Activated naive CD4-positive, alpha-beta T cell treated with anti-CD3 and anti-CD28 coated beads for 36 hours (primary cell): ENCODE measurements at regions of chr12 and their contacts with region 1.

Region 1: GRCh38 chr12:24630446-24630845 is 318.5 kb downstream of the BCAT1 start:
- DNase-seq: no peak
- H3K4me3 Mint-ChIP-seq: no peak overlapping the region
- H3K27ac Mint-ChIP-seq: no peak overlapping the region
- H3K4me1 Mint-ChIP-seq: no peaks in the 10 kb centered on the region
- H3K27me3 Mint-ChIP-seq: peaks cover 2% of the 10 kb centered on the region

Region 2: DNA sequence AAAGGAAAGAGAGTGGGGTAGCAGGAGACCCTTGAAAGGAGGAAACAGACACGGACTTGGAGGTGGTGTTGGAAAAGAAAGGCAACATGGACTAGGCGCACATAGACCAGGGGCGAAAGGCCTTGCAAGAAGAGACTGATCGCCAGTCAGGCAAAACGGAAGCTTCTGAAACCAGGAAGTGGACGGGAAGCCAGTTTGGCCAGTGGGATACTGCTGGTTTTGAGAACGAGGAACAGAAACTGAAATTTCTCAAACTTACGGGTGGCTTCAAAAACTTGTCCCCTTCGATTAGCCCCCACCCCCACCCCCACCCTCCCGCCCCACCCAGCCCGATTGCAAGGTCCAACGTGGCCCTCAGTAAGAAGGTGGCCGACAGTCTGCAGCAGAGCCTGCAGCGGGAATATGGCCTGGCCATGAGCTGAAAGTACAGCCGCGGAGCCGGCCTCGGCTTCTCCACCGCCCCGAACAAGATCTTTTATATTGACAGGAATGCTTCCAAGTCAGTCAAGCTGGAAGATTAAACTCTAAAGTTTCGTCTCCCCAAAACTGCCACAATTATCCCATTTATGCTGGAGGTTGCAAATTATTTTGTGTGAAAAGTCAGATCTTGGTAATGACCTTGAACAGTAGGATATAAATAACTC is 46.3 kb before region 1 on chr12:
- CTCF ChIA-PET with region 1: no interaction called
- intact Hi-C with region 1: loop called (anchors 1 kb)
- DNase-seq: no peak
- H3K4me3 Mint-ChIP-seq: no peak overlapping the region
- H3K27ac Mint-ChIP-seq: no peak overlapping the region
- H3K4me1 Mint-ChIP-seq: no peaks in the 10 kb centered on the region
- H3K27me3 Mint-ChIP-seq: no peaks in the 10 kb centered on the region